ENCODE measurements at regions of chr1 and their contacts with region 1.

Region 1: GRCh38 chr1:24635195-24635843 is 7.8 kb upstream of the SRRM1 start:
- DNase-seq: peak; percentile 79
- H3K4me3 ChIP-seq: no peak overlapping the region
- H3K27ac ChIP-seq: no peak overlapping the region
- H3K4me1 ChIP-seq: no peaks in the 10 kb centered on the region
- H3K27me3 ChIP-seq: peaks cover 8 to 14% of the 10 kb centered on the region in 2 experiments
- CTCF ChIP-seq: peak; percentile 36 to 44
- POLR2A ChIP-seq: no peak

Region 2: GRCh38 chr1:24541711-24542346 is 93.5 kb before region 1 on chr1:
- CTCF ChIA-PET with region 1: interaction called, 5 read pairs
- POLR2A ChIA-PET with region 1: no interaction called
- dilution Hi-C with region 1: no loop called
- intact Hi-C with region 1: loop called (anchors 1 kb)
- DNase-seq: no peak
- H3K4me3 ChIP-seq: no peak overlapping the region
- H3K27ac ChIP-seq: no peak overlapping the region
- H3K4me1 ChIP-seq: peaks cover 3% of the 10 kb centered on the region
- H3K27me3 ChIP-seq: peaks cover 0 to 2% of the 10 kb centered on the region in 2 experiments
- CTCF ChIP-seq: peak; percentile 46 to 47
- POLR2A ChIP-seq: no peak

Region 3: DNA sequence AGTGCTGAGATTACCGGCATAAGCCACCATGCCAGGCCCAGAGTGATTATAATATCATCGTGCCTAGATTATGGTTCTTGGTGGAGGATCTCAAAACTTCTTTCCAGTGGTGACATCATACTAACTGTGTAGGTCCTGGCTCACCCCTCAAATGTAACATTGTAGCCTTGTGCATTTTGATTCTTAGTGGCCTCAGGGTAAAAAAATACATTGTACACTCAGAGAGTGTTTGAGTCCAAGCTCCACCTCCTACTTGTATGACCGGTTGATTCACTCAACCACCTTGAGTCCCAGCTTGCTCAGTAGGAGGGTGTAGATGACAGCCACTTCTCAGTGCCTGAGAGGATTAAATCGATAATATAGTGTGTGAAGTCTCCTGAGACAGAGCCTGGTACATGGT is 41.2 kb before region 1 on chr1:
- CTCF ChIA-PET with region 1: interaction called, 12 read pairs
- POLR2A ChIA-PET with region 1: no interaction called
- dilution Hi-C with region 1: no loop called
- intact Hi-C with region 1: loop called (anchors 2 kb)
- DNase-seq: no peak
- H3K4me3 ChIP-seq: no peak overlapping the region
- H3K27ac ChIP-seq: no peak overlapping the region
- H3K4me1 ChIP-seq: no peaks in the 10 kb centered on the region
- H3K27me3 ChIP-seq: peaks cover 2 to 3% of the 10 kb centered on the region in 2 experiments
- CTCF ChIP-seq: no peak
- POLR2A ChIP-seq: no peak

Region 4: GRCh38 chr1:24606298-24607240 is 28.8 kb before region 1 on chr1:
- CTCF ChIA-PET with region 1: no interaction called
- POLR2A ChIA-PET with region 1: no interaction called
- dilution Hi-C with region 1: no loop called
- intact Hi-C with region 1: no loop called
- DNase-seq: no peak
- H3K4me3 ChIP-seq: no peak overlapping the region
- H3K27ac ChIP-seq: no peak overlapping the region
- H3K4me1 ChIP-seq: no peaks in the 10 kb centered on the region
- H3K27me3 ChIP-seq: peaks cover 0 to 4% of the 10 kb centered on the region in 2 experiments
- CTCF ChIP-seq: no peak
- POLR2A ChIP-seq: no peak

Region 5: GRCh38 chr1:24909388-24909898 is 274.1 kb after region 1 on chr1:
- CTCF ChIA-PET with region 1: no interaction called
- POLR2A ChIA-PET with region 1: no interaction called
- dilution Hi-C with region 1: no loop called
- intact Hi-C with region 1: no loop called
- DNase-seq: peak; percentile 69
- H3K4me3 ChIP-seq: no peak overlapping the region
- H3K27ac ChIP-seq: no peak overlapping the region
- H3K4me1 ChIP-seq: no peaks in the 10 kb centered on the region
- H3K27me3 ChIP-seq: no peaks in the 10 kb centered on the region
- CTCF ChIP-seq: peak; percentile 59 to 79
- POLR2A ChIP-seq: no peak